Caco-2 (cell line): ENCODE measurements at regions of chr9 and their contacts with region 1.

Region 1: DNA sequence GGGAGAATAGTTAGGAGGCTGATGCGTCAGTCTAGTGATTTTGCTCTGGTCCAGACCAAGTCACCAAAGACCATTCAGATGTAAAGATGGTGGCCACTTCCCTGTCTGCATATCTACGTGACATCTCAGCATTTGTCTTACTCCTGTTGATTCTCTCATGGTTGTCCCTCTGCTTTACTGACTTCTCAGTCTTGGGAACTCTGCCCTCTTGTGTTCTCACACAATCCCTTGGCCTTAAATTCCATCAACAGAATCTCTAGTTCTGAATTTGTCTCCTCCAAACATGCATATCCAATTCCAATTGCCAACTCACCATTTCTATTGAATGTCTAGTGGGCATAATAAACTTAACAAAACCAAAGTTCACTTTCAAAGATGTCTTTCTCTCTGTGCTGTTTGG is 147.8 kb downstream of the SLC24A2 start:
- DNase-seq: no peak
- H3K4me3 ChIP-seq: no peak overlapping the region
- H3K4me3 Mint-ChIP-seq: no peak overlapping the region
- H3K27ac Mint-ChIP-seq: no peak overlapping the region
- H3K4me1 ChIP-seq: no peaks in the 10 kb centered on the region
- H3K4me1 Mint-ChIP-seq: no peaks in the 10 kb centered on the region
- H3K27me3 ChIP-seq: no peaks in the 10 kb centered on the region
- H3K27me3 Mint-ChIP-seq: peaks cover 6% of the 10 kb centered on the region
- CTCF ChIP-seq: no peak

Region 2: DNA sequence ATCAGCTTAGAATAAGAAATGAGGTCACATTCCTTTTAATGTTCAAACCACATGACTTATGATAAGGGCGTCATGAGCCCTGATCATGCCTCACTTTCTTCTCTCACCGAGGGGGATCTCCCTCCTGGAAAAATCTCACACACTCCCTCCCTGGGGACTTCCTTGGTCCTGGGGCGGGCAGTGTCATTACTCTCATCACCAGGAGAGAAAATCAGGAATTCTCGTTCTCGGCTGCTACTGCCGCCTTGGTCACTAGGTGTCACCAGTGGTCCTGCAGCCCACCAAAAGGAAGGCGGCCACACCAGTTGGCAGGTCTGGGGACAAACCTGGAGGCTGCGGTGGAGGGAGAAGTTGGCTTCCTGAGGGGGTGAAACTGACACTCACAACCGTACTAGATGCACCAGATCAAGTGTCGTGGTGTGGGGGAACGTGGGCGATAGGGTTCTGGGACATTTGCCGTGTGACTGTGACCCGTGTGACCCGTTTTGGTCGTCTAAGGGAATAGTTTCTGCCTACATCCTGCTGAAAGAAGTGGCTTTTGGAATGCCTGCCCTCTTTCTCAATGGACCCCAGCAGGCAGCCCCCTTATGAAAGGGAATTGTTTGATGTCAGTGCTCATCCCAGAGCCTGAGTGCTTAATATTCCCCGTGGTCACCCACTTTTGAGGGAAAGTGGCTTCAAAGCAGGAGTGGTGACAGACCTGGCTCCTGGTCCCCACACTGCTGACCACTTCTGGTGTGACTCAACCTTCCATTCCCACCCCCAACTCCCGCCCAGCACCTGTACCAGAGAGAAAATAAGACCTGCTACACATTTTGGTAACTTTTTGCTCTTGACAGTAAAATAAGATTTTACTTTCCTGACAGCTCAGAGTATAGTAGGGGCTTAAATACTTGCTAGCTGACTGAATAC is 169.1 kb before region 1 on chr9:
- CTCF ChIA-PET with region 1: no interaction called
- POLR2A ChIA-PET with region 1: no interaction called
- intact Hi-C with region 1: loop called (anchors 2 kb)
- DNase-seq: peak; percentile 58 to 73
- H3K4me3 ChIP-seq: no peak overlapping the region
- H3K4me3 Mint-ChIP-seq: peak overlapping the region; percentile 20
- H3K27ac Mint-ChIP-seq: no peak overlapping the region
- H3K4me1 ChIP-seq: no peaks in the 10 kb centered on the region
- H3K4me1 Mint-ChIP-seq: no peaks in the 10 kb centered on the region
- H3K27me3 ChIP-seq: no peaks in the 10 kb centered on the region
- H3K27me3 Mint-ChIP-seq: peaks cover 14% of the 10 kb centered on the region
- CTCF ChIP-seq: peak; percentile 64 to 81

Region 3: GRCh38 chr9:19493174-19493811 is 147.8 kb before region 1 on chr9:
- CTCF ChIA-PET with region 1: no interaction called
- POLR2A ChIA-PET with region 1: no interaction called
- intact Hi-C with region 1: loop called (anchors 1 kb)
- DNase-seq: peak in 1 of 2 experiments; percentile 51
- H3K4me3 ChIP-seq: no peak overlapping the region
- H3K4me3 Mint-ChIP-seq: no peak overlapping the region
- H3K27ac Mint-ChIP-seq: no peak overlapping the region
- H3K4me1 ChIP-seq: no peaks in the 10 kb centered on the region
- H3K4me1 Mint-ChIP-seq: no peaks in the 10 kb centered on the region
- H3K27me3 ChIP-seq: no peaks in the 10 kb centered on the region
- H3K27me3 Mint-ChIP-seq: peaks cover 7% of the 10 kb centered on the region
- CTCF ChIP-seq: peak; percentile 55 to 61